CD4-positive, alpha-beta T cell (primary cell): ENCODE measurements at regions of chr10 and their contacts with region 1.

Region 1: DNA sequence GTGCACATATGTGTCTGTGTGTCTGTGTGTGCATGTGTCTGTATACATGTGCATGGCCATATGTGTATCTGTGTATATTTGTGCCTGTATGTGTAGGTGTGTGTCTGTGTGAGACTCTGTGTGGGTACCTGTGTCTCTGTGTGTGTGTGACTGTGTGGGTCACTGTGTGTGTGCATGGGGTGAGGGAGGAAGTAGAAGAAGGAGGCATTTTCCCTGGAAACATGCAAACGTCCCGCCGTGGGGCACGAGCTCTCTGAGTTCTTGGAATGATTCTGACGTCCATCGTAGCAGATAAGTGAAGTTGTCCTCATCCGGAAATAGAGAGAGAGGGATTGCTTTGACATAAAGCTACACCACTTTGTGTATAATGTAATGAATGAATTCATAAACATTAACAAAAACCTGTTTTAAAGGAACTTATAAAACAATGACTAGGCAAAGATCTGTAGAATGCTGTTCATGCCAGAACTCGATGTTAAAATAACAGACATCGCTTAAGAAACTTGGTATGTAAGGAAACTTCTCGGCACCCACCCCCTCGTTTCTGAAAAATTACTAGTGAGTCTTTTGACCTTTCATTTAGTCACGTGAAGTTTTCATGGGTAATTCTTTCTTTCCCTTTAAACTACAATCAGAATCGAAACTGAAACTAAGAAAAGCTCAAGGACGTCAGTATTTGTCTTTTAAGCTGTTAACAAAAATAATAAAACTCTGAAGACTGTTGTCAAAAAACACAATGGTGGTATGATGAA is 43.6 kb upstream of the KLF6 start:
- DNase-seq: peak in 5 of 14 experiments; percentile 37 to 85 (median 72)
- ATAC-seq: peak; percentile 64
- H3K4me3 ChIP-seq: peak overlapping the region; percentile 53
- H3K4me3 Mint-ChIP-seq: peak overlapping the region; percentile 88
- H3K27ac ChIP-seq: peak overlapping the region; percentile 61 to 65
- H3K27ac Mint-ChIP-seq: peak overlapping the region; percentile 85
- H3K4me1 ChIP-seq: peaks cover 17% of the 10 kb centered on the region
- H3K4me1 Mint-ChIP-seq: peaks cover 21% of the 10 kb centered on the region
- H3K27me3 ChIP-seq: no peaks in the 10 kb centered on the region
- H3K27me3 Mint-ChIP-seq: no peaks in the 10 kb centered on the region
- CTCF ChIP-seq: no peak

Region 2: GRCh38 chr10:3805791-3806461 is 22.7 kb before region 1 on chr10:
- CTCF ChIA-PET with region 1: no interaction called
- POLR2A ChIA-PET with region 1: interaction called, 27 read pairs
- intact Hi-C with region 1: loop called in 1 of 2 experiments (anchors 1 kb)
- DNase-seq: peak in 11 of 14 experiments; percentile 38 to 85 (median 57)
- ATAC-seq: peak; percentile 2
- H3K4me3 ChIP-seq: peak overlapping the region; percentile 1
- H3K4me3 Mint-ChIP-seq: peak overlapping the region; percentile 66
- H3K27ac ChIP-seq: peak overlapping the region; percentile 97 to 98
- H3K27ac Mint-ChIP-seq: no peak overlapping the region
- H3K4me1 ChIP-seq: peaks cover 90% of the 10 kb centered on the region
- H3K4me1 Mint-ChIP-seq: peaks cover 14% of the 10 kb centered on the region
- H3K27me3 ChIP-seq: no peaks in the 10 kb centered on the region
- H3K27me3 Mint-ChIP-seq: no peaks in the 10 kb centered on the region
- CTCF ChIP-seq: no peak

Region 3: GRCh38 chr10:3811291-3811870 is 17.2 kb before region 1 on chr10:
- CTCF ChIA-PET with region 1: no interaction called
- POLR2A ChIA-PET with region 1: interaction called, 27 read pairs
- intact Hi-C with region 1: loop called in 1 of 2 experiments (anchors 2 kb)
- DNase-seq: peak in 7 of 14 experiments; percentile 24 to 85 (median 48)
- ATAC-seq: peak; percentile 47
- H3K4me3 ChIP-seq: peak overlapping the region; percentile 35
- H3K4me3 Mint-ChIP-seq: peak overlapping the region; percentile 75
- H3K27ac ChIP-seq: peak overlapping the region; percentile 77 to 93
- H3K27ac Mint-ChIP-seq: no peak overlapping the region
- H3K4me1 ChIP-seq: peaks cover 64% of the 10 kb centered on the region
- H3K4me1 Mint-ChIP-seq: peaks cover 48% of the 10 kb centered on the region
- H3K27me3 ChIP-seq: no peaks in the 10 kb centered on the region
- H3K27me3 Mint-ChIP-seq: no peaks in the 10 kb centered on the region
- CTCF ChIP-seq: no peak

Region 4: GRCh38 chr10:3902054-3902808 is 73.7 kb after region 1 on chr10:
- CTCF ChIA-PET with region 1: no interaction called
- POLR2A ChIA-PET with region 1: no interaction called
- intact Hi-C with region 1: no loop called
- DNase-seq: peak in 10 of 14 experiments; percentile 7 to 85 (median 24)
- ATAC-seq: peak; percentile 85
- H3K4me3 ChIP-seq: no peak overlapping the region
- H3K4me3 Mint-ChIP-seq: no peak overlapping the region
- H3K27ac ChIP-seq: no peak overlapping the region
- H3K27ac Mint-ChIP-seq: peak overlapping the region; percentile 4
- H3K4me1 ChIP-seq: peaks cover 17% of the 10 kb centered on the region
- H3K4me1 Mint-ChIP-seq: peaks cover 20% of the 10 kb centered on the region
- H3K27me3 ChIP-seq: no peaks in the 10 kb centered on the region
- H3K27me3 Mint-ChIP-seq: no peaks in the 10 kb centered on the region
- CTCF ChIP-seq: no peak